ENCODE measurements at regions of chr13 and their contacts with region 1.

Region 1: GRCh38 chr13:30306762-30307193 is 573 bp downstream of the KATNAL1 start:
- DNase-seq: peak; percentile 93 to 96
- H3K4me3 ChIP-seq: peak overlapping the region; percentile 77 to 95
- H3K27ac ChIP-seq: peak overlapping the region; percentile 94 to 97
- H3K4me1 ChIP-seq: peaks cover 0 to 65% (median 14%) of the 10 kb centered on the region in 4 donors
- H3K27me3 ChIP-seq: no peaks in the 10 kb centered on the region
- CTCF ChIP-seq: no peak

Region 2: DNA sequence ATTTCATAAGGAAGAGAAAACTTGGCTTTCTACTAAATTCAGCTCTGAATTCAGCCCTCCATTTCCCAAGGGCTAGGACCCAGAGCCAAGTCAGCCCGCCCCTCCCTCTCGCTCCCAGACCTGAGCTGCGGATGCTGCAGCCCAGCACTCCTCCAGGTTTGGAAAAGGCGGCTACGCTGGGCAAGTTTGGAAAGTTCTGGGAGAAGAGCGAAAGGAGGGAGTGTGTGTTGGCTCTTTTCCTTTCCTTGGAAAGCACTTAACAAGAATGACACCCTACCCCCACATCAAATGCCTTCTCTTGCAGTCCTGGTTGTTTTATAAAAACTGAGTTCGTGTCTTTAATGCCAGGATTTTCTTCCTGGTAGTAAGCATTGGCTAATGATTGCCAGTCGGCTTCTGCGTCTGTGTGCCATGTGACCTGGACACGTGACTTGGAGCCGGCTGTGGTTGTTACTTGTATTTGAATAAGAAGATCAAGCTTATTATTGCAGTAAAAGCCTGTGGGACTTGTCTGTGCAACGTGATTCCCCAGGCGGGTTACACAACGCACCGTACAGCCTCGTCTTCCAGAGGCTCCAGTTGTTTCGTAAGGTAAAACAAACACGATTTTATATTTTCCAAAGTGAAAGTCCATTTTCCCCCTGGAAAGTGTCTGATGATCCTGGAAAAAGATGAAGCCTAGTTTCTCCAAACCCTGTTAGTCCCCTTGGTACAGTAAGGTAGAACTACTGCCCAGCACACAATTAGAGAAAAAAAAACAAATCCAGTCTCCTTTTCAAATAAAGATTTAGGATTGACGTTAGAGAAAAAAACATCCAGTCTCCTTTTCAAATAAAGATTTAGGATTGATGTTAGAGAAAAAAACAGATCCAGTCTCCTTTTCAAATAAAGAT is 88.7 kb after region 1 on chr13:
- intact Hi-C with region 1: loop called (anchors 2 kb)
- DNase-seq: peak; percentile 97 to 99
- H3K4me3 ChIP-seq: peak overlapping the region; percentile 55 to 66
- H3K27ac ChIP-seq: peak overlapping the region; percentile 83 to 85
- H3K4me1 ChIP-seq: peaks cover 0 to 7% (median 2%) of the 10 kb centered on the region in 4 donors
- H3K27me3 ChIP-seq: no peaks in the 10 kb centered on the region
- CTCF ChIP-seq: no peak

Measured in tibial artery (tissue), 4 donors.